ENCODE measurements at regions of chr5 and their contacts with region 1.

Region 1: DNA sequence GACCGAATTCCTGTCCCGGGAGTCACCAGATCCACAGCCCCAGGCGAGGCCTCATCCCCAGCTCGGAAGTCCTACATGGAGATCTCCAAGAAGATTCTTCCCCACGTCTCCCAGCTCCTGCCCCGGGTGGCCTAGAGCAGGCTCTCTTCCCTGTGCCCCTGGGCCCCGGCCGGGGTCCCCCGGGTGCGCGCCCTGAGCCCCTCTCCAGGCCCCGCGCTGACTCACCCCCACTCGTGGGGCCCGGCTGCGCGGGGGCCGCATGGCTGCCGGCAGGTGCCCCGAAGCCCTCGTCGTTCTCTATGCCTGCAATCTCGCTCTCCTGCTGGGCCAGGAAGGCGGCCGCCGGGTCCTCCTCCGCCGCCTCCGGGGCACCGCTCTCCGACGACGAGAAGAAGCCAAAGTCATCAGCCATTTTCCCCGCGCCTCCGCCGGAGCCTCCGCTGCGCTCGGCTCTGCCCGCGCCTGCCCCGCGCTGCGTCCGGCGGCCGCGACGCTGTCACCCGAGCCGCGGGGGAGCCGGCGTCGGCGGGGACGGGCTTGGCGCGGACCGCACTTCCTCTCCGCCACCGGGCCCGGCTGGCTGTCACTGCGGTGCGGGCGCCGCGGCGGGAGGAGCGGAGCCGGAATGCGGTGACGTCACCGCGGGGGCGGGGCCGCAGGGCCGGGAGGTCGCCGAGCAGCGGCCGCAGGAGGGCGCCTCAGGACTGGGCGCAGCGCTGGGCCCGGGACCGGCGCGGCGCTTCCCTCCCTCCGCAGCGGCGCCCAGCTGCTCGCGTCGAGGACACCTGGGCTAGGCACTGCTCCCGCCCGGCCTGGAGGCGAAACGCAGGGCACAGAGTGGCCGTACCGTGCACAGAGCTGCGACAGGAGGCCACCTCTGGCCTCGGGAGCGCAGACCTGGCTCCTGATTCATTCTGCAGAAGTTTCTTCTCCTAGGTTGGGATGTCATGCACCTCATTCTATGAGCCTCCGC is at the start of gene CLTB:
- DNase-seq: peak; percentile 89
- ATAC-seq: peak; percentile 97
- H3K4me3 Mint-ChIP-seq: peak within 1 kb of the TSS; percentile 68
- H3K27ac Mint-ChIP-seq: peak within 1 kb of the TSS; percentile 61
- H3K4me1 Mint-ChIP-seq: peaks cover 25% of the 10 kb centered on the region
- H3K27me3 Mint-ChIP-seq: peaks cover 12% of the 10 kb centered on the region
- total RNA-seq, gene CLTB: 56.7 to 61.8 TPM

Region 2: DNA sequence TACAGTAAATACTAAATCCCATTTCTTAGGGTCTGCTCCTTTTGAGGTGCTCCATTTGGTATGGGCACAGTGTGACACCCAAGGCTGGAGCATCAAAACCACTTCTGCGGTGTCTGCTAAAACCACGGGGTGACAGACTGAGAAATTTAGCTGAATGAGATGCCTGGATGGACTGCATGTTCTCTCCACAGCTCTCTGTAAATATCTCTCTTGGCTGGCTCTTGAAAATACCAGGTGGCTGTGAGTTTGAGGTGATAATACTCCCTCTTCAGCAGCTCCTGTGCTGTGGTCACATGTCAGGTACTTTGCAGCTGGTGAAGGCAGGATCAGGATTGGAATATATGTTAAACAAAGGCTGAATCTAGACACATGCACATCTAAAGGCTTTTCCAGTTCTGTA is 271.7 kb before region 1 on chr5:
- CTCF ChIA-PET with region 1: no interaction called
- DNase-seq: no peak
- ATAC-seq: no peak
- H3K4me3 Mint-ChIP-seq: no peak overlapping the region
- H3K27ac Mint-ChIP-seq: no peak overlapping the region
- H3K4me1 Mint-ChIP-seq: peaks cover 8% of the 10 kb centered on the region
- H3K27me3 Mint-ChIP-seq: peaks cover 62% of the 10 kb centered on the region

Region 3: DNA sequence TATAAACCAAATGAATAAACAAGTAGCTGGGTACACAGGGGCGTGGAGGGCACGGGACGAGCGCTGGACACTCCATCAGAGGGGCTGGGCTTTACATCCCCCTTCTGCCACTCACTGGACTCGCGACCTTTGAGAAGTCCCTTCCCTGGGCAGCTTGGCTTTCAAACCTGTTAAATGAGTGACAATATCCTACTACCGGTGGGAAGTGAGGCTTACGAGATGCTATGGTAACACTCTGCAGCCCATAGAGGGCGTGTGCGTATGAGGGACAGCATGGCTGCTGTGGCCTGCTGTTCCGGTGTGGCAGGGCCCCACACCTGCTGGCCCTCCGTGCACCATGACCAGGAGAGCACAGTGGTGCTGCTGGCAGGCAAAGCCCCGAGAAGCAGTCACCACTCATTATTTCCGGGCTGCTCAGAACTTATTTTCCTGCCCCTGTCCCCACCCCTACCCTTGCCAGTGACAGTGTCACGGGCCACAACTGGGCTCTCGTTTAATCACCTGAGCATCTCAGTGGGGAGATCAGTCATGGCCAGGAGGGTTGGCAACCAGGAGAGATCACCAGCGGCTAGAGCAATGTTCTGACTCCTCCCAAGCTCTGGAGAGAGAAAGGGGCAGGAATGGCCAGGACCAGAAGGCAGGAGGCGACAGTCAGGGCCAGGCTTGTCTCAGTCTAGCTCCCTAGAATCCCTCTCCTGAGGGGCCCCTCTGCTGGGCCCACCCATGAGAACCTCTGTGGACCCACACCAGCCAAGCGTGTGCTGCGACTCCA is 10.4 kb before region 1 on chr5:
- CTCF ChIA-PET with region 1: interaction called, 28 read pairs
- DNase-seq: no peak
- ATAC-seq: no peak
- H3K4me3 Mint-ChIP-seq: no peak overlapping the region
- H3K27ac Mint-ChIP-seq: no peak overlapping the region
- H3K4me1 Mint-ChIP-seq: no peaks in the 10 kb centered on the region
- H3K27me3 Mint-ChIP-seq: no peaks in the 10 kb centered on the region

Region 4: DNA sequence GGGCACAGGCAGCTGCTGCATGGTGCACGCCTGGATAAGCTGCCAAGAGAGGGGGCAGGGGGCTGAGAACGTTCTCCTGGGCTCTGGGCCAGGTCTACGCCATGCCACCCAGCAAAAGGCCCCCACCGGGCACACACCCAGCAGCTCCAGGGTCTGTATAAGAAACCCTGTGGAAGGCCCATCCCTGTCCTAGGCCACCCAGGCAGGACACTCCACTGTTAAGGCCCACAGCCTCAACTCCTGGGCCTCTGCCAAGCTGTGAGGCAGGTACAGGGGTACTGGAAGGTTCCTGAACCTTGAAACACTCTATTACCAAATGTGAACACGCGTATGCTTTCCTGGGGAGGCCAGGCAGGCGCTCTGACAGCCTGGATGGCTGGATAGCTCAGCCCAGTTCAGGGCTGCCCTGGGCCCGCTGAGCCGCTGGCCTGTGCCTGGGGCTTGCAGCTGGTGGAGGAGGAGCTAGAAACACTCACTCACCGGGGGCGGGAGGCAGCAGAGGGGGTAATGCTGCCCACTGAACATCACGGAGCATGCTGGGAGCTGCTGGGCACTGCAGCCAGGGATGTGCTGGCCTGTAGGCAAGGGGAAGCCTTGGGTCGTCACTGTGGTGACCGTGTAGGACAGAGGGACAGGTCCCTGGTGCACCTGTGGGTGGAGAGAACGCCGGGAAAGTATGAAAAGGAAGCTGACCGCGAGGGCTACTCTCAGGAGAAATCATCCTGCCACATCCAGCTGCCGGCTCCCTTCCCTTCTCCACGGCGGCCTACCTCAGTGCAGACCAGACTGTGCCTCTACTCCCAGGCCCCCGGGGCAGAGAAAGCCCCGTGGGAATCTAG is 115.0 kb after region 1 on chr5:
- CTCF ChIA-PET with region 1: interaction called, 13 read pairs
- DNase-seq: no peak
- ATAC-seq: no peak
- H3K4me3 Mint-ChIP-seq: peak overlapping the region; percentile 66
- H3K27ac Mint-ChIP-seq: peak overlapping the region; percentile 81
- H3K4me1 Mint-ChIP-seq: peaks cover 59% of the 10 kb centered on the region
- H3K27me3 Mint-ChIP-seq: no peaks in the 10 kb centered on the region

Region 5: GRCh38 chr5:176543428-176544173 is 127.4 kb after region 1 on chr5:
- CTCF ChIA-PET with region 1: interaction called, 28 read pairs
- DNase-seq: peak; percentile 85
- ATAC-seq: peak; percentile 80
- H3K4me3 Mint-ChIP-seq: peak overlapping the region; percentile 92
- H3K27ac Mint-ChIP-seq: peak overlapping the region; percentile 94
- H3K4me1 Mint-ChIP-seq: peaks cover 54% of the 10 kb centered on the region
- H3K27me3 Mint-ChIP-seq: no peaks in the 10 kb centered on the region

Region 6: GRCh38 chr5:176596689-176597416 is 180.6 kb after region 1 on chr5:
- CTCF ChIA-PET with region 1: interaction called, 15 read pairs
- DNase-seq: peak; percentile 67
- ATAC-seq: peak; percentile 89
- H3K4me3 Mint-ChIP-seq: peak overlapping the region; percentile 57
- H3K27ac Mint-ChIP-seq: no peak overlapping the region
- H3K4me1 Mint-ChIP-seq: peaks cover 13% of the 10 kb centered on the region
- H3K27me3 Mint-ChIP-seq: peaks cover 5% of the 10 kb centered on the region